Ovary (tissue), 10 donors: ENCODE measurements at regions of chr19 and their contacts with region 1.

Region 1: DNA sequence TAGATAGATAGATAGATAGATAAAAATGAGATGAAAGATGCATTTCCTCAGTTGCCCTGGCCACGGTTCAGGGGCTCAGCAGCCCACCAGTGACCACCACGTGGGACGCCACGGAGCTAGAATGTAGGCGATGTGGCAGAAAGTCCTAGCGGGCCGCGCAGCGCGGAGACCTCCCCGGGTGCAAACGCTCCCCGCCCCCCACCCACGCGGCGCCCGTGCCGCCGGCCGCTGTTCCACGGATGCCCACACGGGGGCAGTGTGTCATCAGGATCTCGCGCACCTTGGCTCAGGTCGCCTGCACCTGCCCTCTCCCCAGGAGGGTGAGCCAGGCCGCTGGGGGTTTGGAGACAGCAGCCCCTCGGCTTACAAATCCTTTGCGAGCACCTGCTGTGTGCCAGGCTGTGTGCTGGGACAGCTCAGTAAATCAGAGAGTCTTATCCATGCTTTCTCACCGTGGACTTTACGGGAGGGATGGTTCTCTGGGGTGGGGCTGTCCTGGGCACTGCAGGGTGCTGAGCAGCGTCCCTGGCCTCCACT is 13.7 kb upstream of the TLE5 start:
- DNase-seq: peak in 4 of 5 donors; percentile 68 to 80 (median 74)
- H3K4me3 ChIP-seq: no peak overlapping the region
- H3K27ac ChIP-seq: no peak overlapping the region
- H3K4me1 ChIP-seq: no peaks in the 10 kb centered on the region
- H3K27me3 ChIP-seq: no peaks in the 10 kb centered on the region
- CTCF ChIP-seq: peak; percentile 82 to 92 (median 86)
- EP300 ChIP-seq: no peak
- POLR2A ChIP-seq: no peak

Region 2: GRCh38 chr19:3163230-3163886 is 87.4 kb after region 1 on chr19:
- intact Hi-C with region 1: loop called in 3 of 4 experiments (anchors 1 to 5 kb)
- DNase-seq: peak; percentile 62 to 77 (median 74)
- H3K4me3 ChIP-seq: no peak overlapping the region
- H3K27ac ChIP-seq: no peak overlapping the region
- H3K4me1 ChIP-seq: peaks cover 2% of the 10 kb centered on the region
- H3K27me3 ChIP-seq: no peaks in the 10 kb centered on the region
- CTCF ChIP-seq: peak; percentile 81 to 90 (median 89)
- EP300 ChIP-seq: no peak
- POLR2A ChIP-seq: no peak